GM13977 (cell line): ENCODE measurements at regions of chr3 and their contacts with region 1.

Region 1: DNA sequence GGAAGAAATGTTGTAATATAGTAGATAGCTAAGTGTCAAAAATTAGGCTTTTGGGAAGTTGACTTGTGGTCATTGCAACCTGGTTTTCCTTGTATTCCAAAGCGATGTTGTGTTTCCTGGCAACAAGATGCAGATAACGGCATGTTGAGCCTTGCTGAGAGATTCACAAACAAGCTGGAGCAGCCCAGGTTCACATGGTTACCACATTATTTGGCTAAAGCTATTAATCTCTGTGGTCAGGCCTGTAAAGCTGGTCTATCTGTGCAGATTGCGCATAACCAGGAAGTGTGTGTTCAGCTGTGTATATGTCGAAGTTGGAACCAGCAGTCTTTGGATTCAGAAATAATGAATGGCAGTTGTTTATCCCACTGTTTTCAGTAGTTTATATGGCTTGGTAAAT is 6.6 kb downstream of the TIPARP start:
- DNase-seq: peak; percentile 33
- CTCF ChIP-seq: no peak

Region 2: DNA sequence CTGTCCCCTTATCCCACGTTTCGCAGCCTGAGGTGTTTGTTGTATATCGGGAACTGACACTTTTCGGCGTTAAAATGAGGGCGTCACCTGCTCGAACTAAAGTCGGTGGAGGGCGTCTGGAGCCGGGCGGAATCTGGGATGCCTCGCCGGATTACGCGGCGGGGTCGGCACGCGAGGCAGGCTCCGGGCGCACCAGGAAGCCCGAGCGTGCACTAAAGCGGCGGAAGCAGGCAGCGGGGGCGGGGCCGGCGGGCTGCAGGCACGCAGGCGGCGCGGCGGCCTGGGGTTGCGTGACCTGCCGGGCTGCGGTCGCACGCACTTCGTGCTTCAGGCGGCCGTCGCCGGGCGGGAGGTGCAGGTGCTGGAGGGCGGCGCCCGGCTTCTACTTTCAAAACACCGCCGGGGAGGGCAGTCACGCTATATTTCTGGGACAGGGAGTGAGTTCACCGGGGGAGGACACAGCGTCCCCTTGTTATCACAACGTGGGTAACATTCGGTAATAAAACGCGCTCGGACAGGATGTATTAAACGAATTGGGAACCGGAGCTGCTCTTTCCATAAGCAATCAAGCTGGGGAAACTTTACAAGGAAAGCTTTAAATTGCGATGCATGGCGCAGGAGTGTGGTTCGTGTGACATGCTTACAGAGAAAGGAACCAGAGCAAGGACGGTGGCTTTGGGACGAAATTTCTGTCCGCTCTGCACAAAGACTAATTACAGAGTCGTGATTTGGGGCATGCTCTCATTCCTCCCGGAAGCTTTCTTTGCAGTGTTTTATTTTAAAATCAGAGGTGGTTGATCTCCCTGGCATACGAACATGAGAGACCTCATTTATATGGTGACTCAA is 136.0 kb after region 1 on chr3:
- in situ Hi-C with region 1: loop called (anchors 10 kb)
- DNase-seq: peak; percentile 86
- CTCF ChIP-seq: peak; percentile 26